ENCODE measurements at regions of chr11 and their contacts with region 1.

Region 1: DNA sequence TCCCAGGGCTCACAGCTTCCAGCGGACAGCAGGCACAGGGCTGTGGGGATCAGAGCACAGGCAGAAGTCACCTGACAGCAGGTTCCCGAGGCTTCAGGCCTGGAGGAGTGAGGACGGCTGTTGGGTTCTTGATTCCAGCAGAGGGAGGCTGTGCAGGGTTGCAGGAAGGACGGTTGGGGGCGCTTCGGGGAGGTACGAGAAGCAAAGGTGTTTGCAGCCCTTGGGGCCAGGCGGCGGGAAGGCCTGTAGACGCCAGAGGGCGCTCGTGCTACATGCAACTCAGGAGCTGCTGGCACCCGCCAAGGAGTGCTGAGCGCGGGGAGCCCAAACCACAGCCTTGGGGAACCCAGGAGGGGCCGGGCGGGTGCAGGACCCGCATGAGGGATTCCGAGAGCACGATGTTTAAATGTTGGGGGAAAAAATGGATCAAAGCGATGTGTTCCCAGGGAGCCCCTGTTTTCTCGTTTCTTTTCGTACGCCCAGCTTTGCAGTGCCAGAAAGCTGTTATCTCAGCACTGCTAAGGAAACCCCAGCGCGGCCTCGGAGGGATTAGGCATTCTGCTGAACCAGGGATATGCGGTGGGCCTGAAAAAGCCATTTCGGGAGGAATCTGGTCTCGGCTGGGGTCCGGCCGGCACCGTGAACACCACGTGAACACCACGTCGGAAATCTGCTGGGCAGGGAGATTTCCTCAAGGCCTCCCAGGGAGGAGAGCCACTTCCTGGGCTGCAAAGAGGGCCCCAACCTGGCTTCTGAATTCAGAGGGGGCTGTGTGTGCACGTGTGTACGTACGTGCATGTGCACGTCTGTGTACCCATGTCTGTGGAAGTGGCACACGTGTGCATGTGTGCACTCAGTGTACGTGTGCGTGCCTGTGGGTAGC is 88.1 kb downstream of the KCNQ1 start:
- DNase-seq: peak; percentile 97
- H3K4me3 Mint-ChIP-seq: peak overlapping the region; percentile 77
- H3K27ac Mint-ChIP-seq: peak overlapping the region; percentile 75
- H3K4me1 Mint-ChIP-seq: peaks cover 13% of the 10 kb centered on the region
- H3K27me3 Mint-ChIP-seq: peaks cover 1% of the 10 kb centered on the region

Region 2: DNA sequence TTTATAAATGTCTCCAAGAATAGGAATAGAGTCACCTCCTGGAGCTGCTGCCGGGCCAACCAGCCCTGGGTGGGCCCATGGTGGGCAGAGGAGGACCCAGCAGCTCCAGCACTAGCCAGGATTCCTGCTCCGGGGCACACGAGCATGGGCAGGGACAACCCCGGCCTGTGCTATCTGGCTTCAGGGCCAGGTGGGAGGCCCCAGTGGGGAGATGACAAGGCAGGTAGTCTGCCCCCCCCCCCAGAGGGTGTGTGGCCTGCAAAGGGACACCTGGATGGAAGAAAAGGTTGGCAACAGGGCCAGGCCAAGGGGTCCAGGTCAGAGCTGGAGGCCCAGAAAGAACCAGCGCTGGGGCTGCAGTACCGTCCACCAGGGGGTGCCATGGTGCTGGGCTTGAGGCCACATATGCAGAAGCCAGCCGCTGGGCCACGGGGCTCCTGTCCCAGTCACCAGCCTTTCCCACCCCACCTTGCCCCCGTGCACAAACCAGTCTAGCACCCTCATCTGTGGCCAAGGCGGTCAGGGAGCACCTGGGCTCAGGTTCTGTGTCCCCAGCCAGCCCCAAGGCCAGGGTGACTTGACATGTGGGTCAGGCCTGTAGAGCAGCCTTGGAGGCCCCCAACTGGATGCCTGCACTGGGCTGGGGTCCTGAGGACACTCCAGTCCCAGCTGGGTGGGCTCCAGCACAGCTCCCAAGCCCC is 227.7 kb before region 1 on chr11:
- intact Hi-C with region 1: loop called (anchors 10 kb)
- DNase-seq: peak; percentile 95
- H3K4me3 Mint-ChIP-seq: peak overlapping the region; percentile 71
- H3K27ac Mint-ChIP-seq: peak overlapping the region; percentile 29
- H3K4me1 Mint-ChIP-seq: peaks cover 31% of the 10 kb centered on the region
- H3K27me3 Mint-ChIP-seq: no peaks in the 10 kb centered on the region

Region 3: DNA sequence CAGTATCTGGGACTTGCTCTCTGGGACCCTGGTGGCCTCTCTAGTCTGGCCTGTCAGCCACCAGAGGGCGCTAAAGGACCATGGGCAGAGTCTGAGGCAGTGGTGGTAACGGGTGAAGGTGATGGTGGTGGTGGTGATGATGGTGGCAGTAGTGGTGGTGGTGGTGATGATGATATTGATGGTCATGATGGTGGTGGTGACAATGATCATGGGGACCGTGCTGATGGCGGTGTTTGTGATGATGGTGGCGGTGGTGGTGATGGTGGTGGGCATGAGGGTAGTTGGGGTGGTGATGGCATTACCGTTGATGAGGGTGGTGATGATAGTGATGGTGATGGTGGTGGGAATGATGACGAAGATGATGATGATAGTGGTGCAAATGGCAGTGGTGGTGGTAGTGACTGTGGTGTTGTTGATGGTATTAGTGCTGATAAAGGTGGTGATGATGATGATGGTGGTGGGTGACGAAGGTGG is 104.6 kb before region 1 on chr11:
- intact Hi-C with region 1: loop called (anchors 1 kb)
- DNase-seq: peak; percentile 95
- H3K4me3 Mint-ChIP-seq: no peak overlapping the region
- H3K27ac Mint-ChIP-seq: no peak overlapping the region
- H3K4me1 Mint-ChIP-seq: no peaks in the 10 kb centered on the region
- H3K27me3 Mint-ChIP-seq: no peaks in the 10 kb centered on the region

Region 4: GRCh38 chr11:2444821-2445745 is 87.9 kb before region 1 on chr11 and contains the start of gene KCNQ1:
- intact Hi-C with region 1: loop called (anchors 5 kb)
- DNase-seq: peak; percentile 90
- H3K4me3 Mint-ChIP-seq: peak within 1 kb of the TSS; percentile 91
- H3K27ac Mint-ChIP-seq: peak within 1 kb of the TSS; percentile 64
- H3K4me1 Mint-ChIP-seq: peaks cover 13% of the 10 kb centered on the region
- H3K27me3 Mint-ChIP-seq: peaks cover 19% of the 10 kb centered on the region
- total RNA-seq, gene KCNQ1: 6.4 TPM in 2 replicates

Region 5: GRCh38 chr11:2892215-2893020 is 359.5 kb after region 1 on chr11:
- intact Hi-C with region 1: loop called (anchors 1 kb)
- DNase-seq: peak; percentile 90
- H3K4me3 Mint-ChIP-seq: peak overlapping the region; percentile 90
- H3K27ac Mint-ChIP-seq: peak overlapping the region; percentile 80
- H3K4me1 Mint-ChIP-seq: peaks cover 12% of the 10 kb centered on the region
- H3K27me3 Mint-ChIP-seq: peaks cover under 1% of the 10 kb centered on the region

Region 6: DNA sequence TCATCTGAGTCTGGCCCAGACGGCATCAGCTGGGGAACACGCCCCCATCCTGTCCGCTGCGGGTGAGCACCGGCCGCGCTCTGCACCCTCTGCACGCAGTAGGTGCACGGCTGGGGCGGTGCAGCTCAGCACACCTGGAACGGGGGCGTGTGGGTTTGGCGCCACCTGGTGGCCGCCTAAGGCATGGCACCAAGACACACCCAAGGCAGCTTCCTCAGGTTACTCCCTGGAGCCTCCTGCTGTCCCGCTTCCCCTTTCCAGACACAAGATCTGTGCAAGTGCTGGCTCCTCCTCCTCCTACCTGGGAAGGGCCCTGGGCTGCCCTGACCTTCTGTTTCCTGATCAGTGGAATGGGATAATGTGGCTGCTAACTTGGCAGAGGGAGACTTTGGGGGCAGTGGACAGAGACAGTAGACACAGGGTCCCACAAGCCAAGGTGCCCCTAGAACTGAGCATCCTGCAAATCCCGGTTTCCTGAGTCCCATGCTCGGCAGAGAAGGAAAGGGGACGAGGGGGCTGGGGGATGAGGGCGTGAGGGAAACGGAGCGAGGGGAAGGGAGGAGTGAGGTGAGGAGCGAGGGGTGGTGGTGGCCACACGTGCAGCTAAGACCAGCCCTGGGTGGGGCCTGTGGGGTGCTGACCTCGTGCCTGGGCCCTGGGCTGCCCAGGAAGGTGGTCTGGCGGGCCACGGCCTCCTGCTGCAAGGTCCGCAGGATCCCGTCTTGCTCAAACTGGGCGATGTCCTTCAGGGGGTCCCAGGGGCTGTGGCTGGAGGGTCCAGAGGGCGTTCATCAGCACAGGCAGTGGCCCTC is 559.1 kb after region 1 on chr11:
- intact Hi-C with region 1: loop called (anchors 1 kb)
- DNase-seq: peak; percentile 92
- H3K4me3 Mint-ChIP-seq: no peak overlapping the region
- H3K27ac Mint-ChIP-seq: no peak overlapping the region
- H3K4me1 Mint-ChIP-seq: peaks cover 4% of the 10 kb centered on the region
- H3K27me3 Mint-ChIP-seq: peaks cover 7% of the 10 kb centered on the region